Activated CD4-positive, alpha-beta T cell treated with anti-CD3 and anti-CD28 coated beads for 36 hours (primary cell): ENCODE measurements at regions of chr14 and their contacts with region 1.

Region 1: DNA sequence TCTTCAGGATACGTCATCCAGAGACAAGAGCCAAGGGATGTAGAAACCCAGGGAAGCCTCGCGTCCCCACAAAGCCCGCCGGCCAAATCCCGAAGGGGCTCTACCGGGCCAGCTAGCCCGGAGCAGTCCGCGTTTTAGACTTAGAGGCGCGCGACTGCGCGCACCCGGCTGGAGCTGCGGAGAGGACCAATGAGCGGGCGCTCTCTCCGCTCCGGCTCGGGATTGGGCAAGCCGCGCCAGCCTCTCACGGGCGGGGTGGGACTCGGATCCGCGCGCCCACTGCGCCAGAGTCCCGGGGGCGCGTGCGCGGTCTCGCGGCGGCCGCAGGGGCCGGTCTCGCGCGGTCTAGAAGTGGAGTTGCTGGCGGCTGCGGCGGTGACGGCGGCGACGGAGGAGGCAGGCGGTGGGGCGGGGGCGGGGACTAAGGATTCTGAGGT is 239 bp upstream of the PALS1 start:
- DNase-seq: peak; percentile 97
- ATAC-seq: peak; percentile 95
- H3K4me3 Mint-ChIP-seq: peak overlapping the region; percentile 79
- H3K27ac Mint-ChIP-seq: peak overlapping the region; percentile 83
- H3K4me1 Mint-ChIP-seq: peaks cover 21% of the 10 kb centered on the region
- H3K27me3 Mint-ChIP-seq: peaks cover 8% of the 10 kb centered on the region

Region 2: GRCh38 chr14:66998013-66998412 is 243.0 kb before region 1 on chr14:
- CTCF ChIA-PET with region 1: no interaction called
- POLR2A ChIA-PET with region 1: no interaction called
- intact Hi-C with region 1: loop called in 1 of 2 experiments (anchors 5 kb)
- DNase-seq: peak; percentile 37
- ATAC-seq: peak; percentile 98
- H3K4me3 Mint-ChIP-seq: no peak overlapping the region
- H3K27ac Mint-ChIP-seq: no peak overlapping the region
- H3K4me1 Mint-ChIP-seq: peaks cover 11% of the 10 kb centered on the region
- H3K27me3 Mint-ChIP-seq: no peaks in the 10 kb centered on the region

Region 3: DNA sequence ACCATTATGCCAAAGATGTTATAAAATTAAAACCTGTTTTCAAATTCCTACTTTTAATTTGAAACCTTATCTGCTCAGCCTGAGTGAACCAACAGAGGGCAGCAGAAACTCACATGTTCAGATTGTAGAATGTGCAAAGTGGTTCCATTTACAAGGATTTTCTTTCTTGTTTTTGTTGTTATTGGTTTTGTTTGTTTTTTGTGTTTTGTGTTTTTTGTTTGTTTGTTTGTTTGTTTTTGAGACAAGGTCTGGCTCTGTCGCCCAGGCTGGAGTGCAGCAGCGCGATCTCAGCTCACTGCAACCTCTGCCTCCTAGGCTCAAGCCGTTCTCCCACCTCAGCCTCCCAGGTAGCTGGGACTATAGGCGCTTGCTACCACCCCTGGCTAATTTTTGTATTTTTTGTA is 74.5 kb before region 1 on chr14:
- CTCF ChIA-PET with region 1: no interaction called
- POLR2A ChIA-PET with region 1: no interaction called
- intact Hi-C with region 1: loop called in 1 of 2 experiments (anchors 2 kb)
- DNase-seq: peak; percentile 58
- ATAC-seq: no peak
- H3K4me3 Mint-ChIP-seq: no peak overlapping the region
- H3K27ac Mint-ChIP-seq: no peak overlapping the region
- H3K4me1 Mint-ChIP-seq: no peaks in the 10 kb centered on the region
- H3K27me3 Mint-ChIP-seq: no peaks in the 10 kb centered on the region

Region 4: GRCh38 chr14:67487937-67488893 is 247.2 kb after region 1 on chr14 and contains the start of gene TMEM229B:
- CTCF ChIA-PET with region 1: no interaction called
- POLR2A ChIA-PET with region 1: no interaction called
- intact Hi-C with region 1: loop called in 1 of 2 experiments (anchors 2 kb)
- DNase-seq: peak; percentile 85
- ATAC-seq: peak; percentile 97
- H3K4me3 Mint-ChIP-seq: peak within 1 kb of the TSS; percentile 78
- H3K27ac Mint-ChIP-seq: peak within 1 kb of the TSS; percentile 91
- H3K4me1 Mint-ChIP-seq: peaks cover 55% of the 10 kb centered on the region
- H3K27me3 Mint-ChIP-seq: no peaks in the 10 kb centered on the region
- total RNA-seq, gene TMEM229B: 1.3 to 1.5 TPM

Region 5: GRCh38 chr14:67695394-67695949 is 454.5 kb after region 1 on chr14 and contains the start of gene RDH11:
- CTCF ChIA-PET with region 1: no interaction called
- POLR2A ChIA-PET with region 1: no interaction called
- intact Hi-C with region 1: loop called in 1 of 2 experiments (anchors 1 kb)
- DNase-seq: peak; percentile 92
- ATAC-seq: peak; percentile 88
- H3K4me3 Mint-ChIP-seq: peak within 1 kb of the TSS; percentile 91
- H3K27ac Mint-ChIP-seq: peak within 1 kb of the TSS; percentile 98
- H3K4me1 Mint-ChIP-seq: peaks cover 21% of the 10 kb centered on the region
- H3K27me3 Mint-ChIP-seq: no peaks in the 10 kb centered on the region
- total RNA-seq, gene RDH11: 72.0 to 75.6 TPM